ENCODE measurements at regions of chr7 and their contacts with region 1.

Region 1: DNA sequence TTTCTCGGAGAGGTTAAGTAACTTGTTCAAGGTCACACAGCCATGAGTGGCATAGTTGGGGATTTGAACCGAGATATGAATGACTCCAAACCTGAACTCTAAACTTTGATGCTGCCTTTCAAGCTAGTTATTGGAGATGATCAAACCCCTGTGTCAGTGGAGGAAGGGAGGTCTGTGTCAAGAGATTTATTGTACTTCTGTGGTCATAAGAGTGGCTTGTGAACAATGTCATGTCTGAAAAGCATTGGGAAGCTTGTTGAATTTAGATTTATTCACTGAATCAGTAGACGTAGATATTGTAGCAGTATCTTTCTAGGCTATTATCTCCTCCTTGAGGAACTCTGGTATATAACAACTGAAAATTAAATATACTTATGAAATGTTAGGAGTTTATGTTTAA is 27.3 kb downstream of the SNX10 start:
- DNase-seq: no peak
- ATAC-seq: no peak
- H3K4me3 ChIP-seq: no peak overlapping the region
- H3K4me3 Mint-ChIP-seq: no peak overlapping the region
- H3K27ac ChIP-seq: peak overlapping the region in 1 of 2 donors; percentile 74
- H3K27ac Mint-ChIP-seq: peak overlapping the region; percentile 61
- H3K4me1 ChIP-seq: peaks cover 41% of the 10 kb centered on the region in 2 donors
- H3K4me1 Mint-ChIP-seq: peaks cover 68% of the 10 kb centered on the region
- H3K27me3 ChIP-seq: no peaks in the 10 kb centered on the region
- H3K27me3 Mint-ChIP-seq: no peaks in the 10 kb centered on the region
- CTCF ChIP-seq: no peak

Region 2: GRCh38 chr7:26305463-26306273 is 13.3 kb before region 1 on chr7:
- CTCF ChIA-PET with region 1: no interaction called
- POLR2A ChIA-PET with region 1: no interaction called
- intact Hi-C with region 1: loop called (anchors 1 kb)
- DNase-seq: peak; percentile 47
- ATAC-seq: peak; percentile 31
- H3K4me3 ChIP-seq: peak overlapping the region in 3 of 5 experiments; percentile 3 to 15 (median 6)
- H3K4me3 Mint-ChIP-seq: peak overlapping the region; percentile 53
- H3K27ac ChIP-seq: peak overlapping the region; percentile 69 to 86
- H3K27ac Mint-ChIP-seq: peak overlapping the region; percentile 81
- H3K4me1 ChIP-seq: peaks cover 17 to 43% of the 10 kb centered on the region in 2 donors
- H3K4me1 Mint-ChIP-seq: peaks cover 62% of the 10 kb centered on the region
- H3K27me3 ChIP-seq: no peaks in the 10 kb centered on the region
- H3K27me3 Mint-ChIP-seq: no peaks in the 10 kb centered on the region
- CTCF ChIP-seq: no peak

Region 3: DNA sequence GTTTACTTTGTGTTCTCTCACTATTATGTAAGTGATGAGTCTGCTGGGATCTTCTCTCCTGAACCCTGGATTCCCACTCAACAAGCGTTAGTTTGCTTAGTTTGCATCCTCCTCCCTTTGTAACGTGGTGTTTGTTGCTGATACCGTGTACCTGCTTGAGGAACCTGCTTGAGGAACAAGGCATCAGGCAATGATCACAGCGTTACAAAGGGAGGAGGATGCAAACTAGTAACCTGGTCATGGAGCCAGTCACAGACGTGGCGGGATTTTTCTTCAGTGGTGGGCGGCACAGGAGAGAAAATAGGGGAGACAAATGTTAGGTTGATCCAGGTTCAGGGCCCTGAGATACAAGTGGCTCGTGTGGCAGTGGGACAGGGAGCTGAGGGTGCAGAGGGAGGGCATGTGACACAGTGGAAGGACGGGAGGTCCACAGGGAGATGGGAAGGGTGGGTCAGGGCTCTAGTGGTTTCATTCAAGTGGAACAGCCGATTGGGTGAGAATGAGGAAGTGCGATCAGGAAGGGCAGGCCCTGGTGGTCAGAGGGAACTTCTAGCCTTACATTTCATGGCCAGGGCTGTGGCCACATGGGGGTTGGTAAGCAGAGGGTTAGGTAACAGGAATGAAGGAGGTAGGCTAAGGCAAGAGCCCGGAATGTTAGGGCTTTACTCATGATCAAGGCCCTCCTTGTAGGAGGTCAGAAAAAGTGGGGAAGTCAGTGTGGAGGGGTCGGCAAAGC is 10.8 kb after region 1 on chr7:
- CTCF ChIA-PET with region 1: interaction called, 6 read pairs
- POLR2A ChIA-PET with region 1: interaction called, 7 read pairs
- intact Hi-C with region 1: loop called (anchors 2 kb)
- DNase-seq: peak; percentile 65
- ATAC-seq: peak; percentile 83
- H3K4me3 ChIP-seq: peak overlapping the region in 3 of 5 experiments; percentile 3 to 46 (median 22)
- H3K4me3 Mint-ChIP-seq: peak overlapping the region; percentile 83
- H3K27ac ChIP-seq: peak overlapping the region; percentile 45 to 74
- H3K27ac Mint-ChIP-seq: peak overlapping the region; percentile 97
- H3K4me1 ChIP-seq: peaks cover 59 to 62% of the 10 kb centered on the region in 2 donors
- H3K4me1 Mint-ChIP-seq: peaks cover 78% of the 10 kb centered on the region
- H3K27me3 ChIP-seq: no peaks in the 10 kb centered on the region
- H3K27me3 Mint-ChIP-seq: no peaks in the 10 kb centered on the region
- CTCF ChIP-seq: no peak

Region 4: DNA sequence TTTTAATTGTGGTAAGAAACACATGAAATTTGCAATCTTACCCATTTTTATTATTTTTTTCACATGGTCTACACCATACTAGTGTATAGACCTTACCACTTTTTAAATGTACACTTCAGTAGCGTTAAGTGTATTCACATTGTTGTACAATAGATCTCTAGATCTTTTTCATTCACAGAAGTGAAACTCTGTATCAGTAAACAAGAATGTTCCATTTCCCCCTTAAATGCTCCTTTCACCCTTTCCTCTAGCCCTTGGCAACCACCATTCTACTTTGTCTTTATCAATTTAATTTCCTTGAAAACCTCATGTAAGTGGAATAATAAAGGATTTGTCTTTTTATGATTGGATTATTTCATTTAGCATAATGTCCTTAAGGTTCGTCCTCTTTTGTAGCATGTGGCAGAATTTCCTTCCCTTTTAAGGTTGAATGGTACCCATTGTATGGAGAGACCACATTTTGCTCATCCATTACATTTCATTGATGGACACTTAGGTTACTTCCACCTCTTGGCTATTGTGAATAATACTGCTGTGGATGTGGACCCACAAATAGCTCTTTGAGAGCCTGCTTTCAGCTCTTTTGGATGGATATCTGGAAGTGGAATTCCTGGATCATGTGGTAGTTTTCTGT is 18.4 kb after region 1 on chr7:
- CTCF ChIA-PET with region 1: interaction called, 5 read pairs
- POLR2A ChIA-PET with region 1: interaction called, 9 read pairs
- intact Hi-C with region 1: loop called (anchors 1 kb)
- DNase-seq: peak; percentile 55
- ATAC-seq: peak; percentile 62
- H3K4me3 ChIP-seq: peak overlapping the region in 1 of 5 experiments; percentile 57
- H3K4me3 Mint-ChIP-seq: peak overlapping the region; percentile 78
- H3K27ac ChIP-seq: peak overlapping the region; percentile 36 to 68
- H3K27ac Mint-ChIP-seq: peak overlapping the region; percentile 91
- H3K4me1 ChIP-seq: peaks cover 70 to 80% of the 10 kb centered on the region in 2 donors
- H3K4me1 Mint-ChIP-seq: peaks cover 66% of the 10 kb centered on the region
- H3K27me3 ChIP-seq: no peaks in the 10 kb centered on the region
- H3K27me3 Mint-ChIP-seq: no peaks in the 10 kb centered on the region
- CTCF ChIP-seq: no peak

Region 5: GRCh38 chr7:26356929-26357798 is 38.2 kb after region 1 on chr7:
- CTCF ChIA-PET with region 1: interaction called, 4 read pairs
- POLR2A ChIA-PET with region 1: no interaction called
- intact Hi-C with region 1: loop called (anchors 1 kb)
- DNase-seq: no peak
- ATAC-seq: no peak
- H3K4me3 ChIP-seq: no peak overlapping the region
- H3K4me3 Mint-ChIP-seq: no peak overlapping the region
- H3K27ac ChIP-seq: no peak overlapping the region
- H3K27ac Mint-ChIP-seq: peak overlapping the region; percentile 58
- H3K4me1 ChIP-seq: peaks cover 21 to 37% of the 10 kb centered on the region in 2 donors
- H3K4me1 Mint-ChIP-seq: peaks cover 42% of the 10 kb centered on the region
- H3K27me3 ChIP-seq: no peaks in the 10 kb centered on the region
- H3K27me3 Mint-ChIP-seq: no peaks in the 10 kb centered on the region
- CTCF ChIP-seq: no peak

Measured in B cell (primary cell).